GM13977 (cell line): ENCODE measurements at regions of chr1 and their contacts with region 1.

Region 1: DNA sequence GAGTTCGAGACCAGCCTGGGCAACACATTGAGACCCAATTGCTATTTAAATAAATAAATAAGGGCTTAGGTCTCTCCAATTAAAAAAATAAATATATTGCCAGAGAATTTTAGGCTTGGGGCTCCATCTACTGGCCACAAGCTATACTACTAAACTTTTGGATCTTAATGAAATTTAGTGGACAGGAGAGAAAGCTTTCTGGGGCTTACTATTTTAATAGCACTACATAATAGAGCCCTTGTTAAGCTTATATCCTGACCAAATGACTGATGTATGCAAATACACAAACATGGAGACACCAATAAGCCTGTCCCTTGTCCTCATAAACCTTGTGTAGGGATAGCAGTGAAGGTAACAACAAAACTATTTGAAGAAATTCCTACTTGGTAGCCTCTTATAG is 18.4 kb downstream of the CCT3 start:
- DNase-seq: no peak
- CTCF ChIP-seq: peak; percentile 46

Region 2: GRCh38 chr1:155794605-155795245 is 524.9 kb before region 1 on chr1:
- in situ Hi-C with region 1: no loop called
- DNase-seq: no peak
- CTCF ChIP-seq: no peak

Region 3: GRCh38 chr1:156096640-156097391 is 222.8 kb before region 1 on chr1:
- in situ Hi-C with region 1: loop called (anchors 10 kb)
- DNase-seq: peak; percentile 85
- CTCF ChIP-seq: peak; percentile 98

Region 4: DNA sequence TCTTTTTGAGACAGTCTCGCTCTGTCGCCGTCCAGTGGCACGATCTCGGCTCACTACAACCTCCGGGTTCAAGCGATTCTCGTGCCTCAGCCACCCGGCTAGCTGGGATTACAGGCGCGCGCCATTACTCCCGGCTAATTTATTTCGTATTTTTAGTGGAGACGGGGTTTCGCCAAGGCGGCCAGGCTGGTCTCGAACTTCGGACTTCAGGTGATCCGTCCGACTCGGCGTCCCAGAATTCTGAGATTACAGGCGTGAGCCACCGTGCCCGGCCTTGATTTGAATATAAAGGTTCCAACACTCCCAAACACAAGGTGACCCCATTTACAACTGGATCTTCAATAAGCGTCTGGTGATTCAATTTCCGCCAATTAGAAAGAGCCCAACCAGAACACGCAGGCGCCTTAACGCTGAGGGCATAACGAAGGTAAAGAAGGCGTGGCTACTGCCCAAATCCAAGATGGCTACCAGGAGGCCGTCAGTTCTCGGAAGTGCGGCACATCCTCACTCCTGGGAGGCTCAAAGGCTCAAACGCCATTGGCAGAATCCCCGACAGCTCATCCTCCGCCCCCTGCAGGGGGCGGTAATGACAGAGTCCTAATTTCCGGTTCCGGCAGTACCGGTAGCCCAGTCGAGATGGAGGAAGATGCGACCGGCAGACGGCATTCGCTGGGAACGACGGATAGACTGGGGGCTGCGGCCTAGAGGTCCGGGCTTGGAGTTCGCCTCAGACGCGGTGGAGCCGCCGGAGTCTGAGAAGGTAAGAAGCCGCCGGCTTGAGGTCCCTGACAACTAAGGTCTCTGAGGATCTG is 126.0 kb before region 1 on chr1 and contains the start of gene SLC25A44:
- in situ Hi-C with region 1: no loop called
- DNase-seq: peak; percentile 91
- CTCF ChIP-seq: peak; percentile 31

Region 5: DNA sequence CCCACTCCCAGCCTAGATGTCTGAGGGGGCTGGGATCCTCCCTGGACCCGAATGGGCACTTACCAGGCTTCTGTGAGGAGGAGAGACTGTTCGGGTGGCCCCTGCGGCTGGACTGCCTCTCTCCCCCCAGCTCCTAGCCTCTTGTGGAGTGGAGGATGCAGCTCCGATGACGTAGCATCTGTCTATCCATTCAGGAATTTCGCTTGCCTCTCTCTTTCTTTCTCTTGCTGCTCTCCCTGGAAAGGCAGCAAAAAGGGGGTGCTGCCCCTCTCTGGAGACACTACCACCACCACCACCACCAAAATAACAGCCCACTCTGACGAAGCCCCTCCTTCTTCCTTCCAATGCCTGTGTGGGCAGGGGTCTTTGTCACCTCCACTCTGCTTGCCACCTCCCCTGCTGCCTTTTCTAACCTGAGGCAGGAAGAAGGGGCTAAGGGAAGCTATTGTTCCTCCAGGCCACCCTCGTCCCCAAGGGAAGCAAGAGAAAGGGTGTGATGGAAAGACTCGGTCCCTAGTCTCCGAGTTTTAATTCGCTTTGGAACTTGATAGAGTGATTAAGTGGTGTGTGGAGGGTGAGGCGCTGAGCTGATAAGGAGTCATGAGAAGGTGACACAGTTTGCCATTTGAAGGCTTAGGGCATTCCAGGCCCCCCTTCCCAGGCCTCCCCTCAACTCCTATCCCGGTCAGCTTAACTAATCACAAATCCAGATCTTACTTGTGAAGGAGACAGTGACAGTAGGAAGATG is 109.8 kb after region 1 on chr1:
- in situ Hi-C with region 1: no loop called
- DNase-seq: no peak
- CTCF ChIP-seq: no peak